Gastrocnemius medialis (tissue), 4 donors: ENCODE measurements at regions of chr5 and their contacts with region 1.

Region 1: DNA sequence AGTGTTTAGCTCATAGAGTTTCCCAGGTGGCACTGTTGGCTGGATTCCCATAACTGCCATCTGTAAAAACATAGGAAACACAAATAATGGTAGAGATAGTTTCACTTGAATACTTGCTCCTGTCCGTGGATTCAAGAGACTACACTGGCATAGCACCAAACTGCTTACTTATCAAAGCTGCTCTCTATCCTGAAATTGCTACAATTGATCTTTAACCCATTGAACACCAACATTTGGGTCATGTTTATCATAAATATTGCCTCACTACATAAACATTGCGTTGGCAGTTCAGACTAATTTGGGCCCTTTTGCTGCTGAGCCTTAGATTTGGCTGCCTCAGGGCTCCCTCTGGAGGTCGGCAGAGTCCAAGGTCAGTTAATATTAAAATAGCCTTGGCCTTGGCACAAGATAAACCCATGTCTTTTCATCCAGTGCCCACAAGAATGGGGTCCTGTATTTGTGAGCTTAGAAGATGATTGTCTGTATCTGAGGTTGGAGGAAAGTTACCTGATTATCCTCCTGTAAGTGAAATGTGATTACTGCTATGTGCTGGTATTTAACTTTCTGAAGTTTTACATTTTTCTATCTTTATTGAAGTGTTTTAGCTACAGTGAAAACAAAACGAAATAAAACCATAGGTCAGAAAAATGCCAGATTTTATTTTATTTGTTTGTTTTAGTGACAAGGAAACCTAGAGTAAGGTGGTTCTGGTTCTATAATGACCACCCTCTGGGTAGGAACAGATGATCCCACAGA is 4.0 kb upstream of the RANBP3L start:
- DNase-seq: peak in 1 of 2 donors; percentile 23
- ATAC-seq: peak; percentile 57 to 79
- H3K4me3 ChIP-seq: no peak overlapping the region
- H3K27ac ChIP-seq: no peak overlapping the region
- H3K4me1 ChIP-seq: peaks cover 19 to 23% of the 10 kb centered on the region in 2 donors
- H3K27me3 ChIP-seq: no peaks in the 10 kb centered on the region
- CTCF ChIP-seq: peak; percentile 58 to 69 (median 62)
- POLR2A ChIP-seq: no peak

Region 2: GRCh38 chr5:36177715-36178523 is 127.8 kb before region 1 on chr5:
- in situ Hi-C with region 1: loop called in 2 of 4 experiments (anchors 10 kb)
- intact Hi-C with region 1: loop called (anchors 2 kb)
- DNase-seq: no peak
- ATAC-seq: peak in 1 of 2 donors; percentile 61
- H3K4me3 ChIP-seq: no peak overlapping the region
- H3K27ac ChIP-seq: no peak overlapping the region
- H3K4me1 ChIP-seq: no peaks in the 10 kb centered on the region
- H3K27me3 ChIP-seq: no peaks in the 10 kb centered on the region
- CTCF ChIP-seq: peak in 3 of 5 experiments; percentile 18 to 53 (median 39)
- POLR2A ChIP-seq: no peak

Region 3: GRCh38 chr5:36269479-36270219 is 36.1 kb before region 1 on chr5:
- in situ Hi-C with region 1: loop called in 2 of 4 experiments (anchors 5 kb)
- intact Hi-C with region 1: loop called (anchors 5 kb)
- DNase-seq: no peak
- ATAC-seq: no peak
- H3K4me3 ChIP-seq: no peak overlapping the region
- H3K27ac ChIP-seq: no peak overlapping the region
- H3K4me1 ChIP-seq: no peaks in the 10 kb centered on the region
- H3K27me3 ChIP-seq: no peaks in the 10 kb centered on the region
- CTCF ChIP-seq: no peak
- POLR2A ChIP-seq: no peak